CD4-positive, alpha-beta T cell (primary cell): ENCODE measurements at regions of chr6 and their contacts with region 1.

Region 1: GRCh38 chr6:30066577-30067459 is at the start of gene PPP1R11:
- DNase-seq: peak; percentile 95 to 100 (median 98)
- ATAC-seq: peak; percentile 95
- H3K4me3 ChIP-seq: peak within 1 kb of the TSS; percentile 79
- H3K4me3 Mint-ChIP-seq: peak within 1 kb of the TSS; percentile 94
- H3K27ac ChIP-seq: peak within 1 kb of the TSS; percentile 83 to 96
- H3K27ac Mint-ChIP-seq: peak within 1 kb of the TSS; percentile 96
- H3K4me1 ChIP-seq: peaks cover 42% of the 10 kb centered on the region
- H3K4me1 Mint-ChIP-seq: peaks cover 69% of the 10 kb centered on the region
- H3K27me3 ChIP-seq: peaks cover 9% of the 10 kb centered on the region in 2 experiments
- H3K27me3 Mint-ChIP-seq: peaks cover 14% of the 10 kb centered on the region
- CTCF ChIP-seq: no peak
- total RNA-seq, gene PPP1R11: 28.3 to 28.6 TPM

Region 2: GRCh38 chr6:29926413-29927274 is 140.2 kb before region 1 on chr6:
- CTCF ChIA-PET with region 1: no interaction called
- POLR2A ChIA-PET with region 1: no interaction called
- intact Hi-C with region 1: loop called in 1 of 2 experiments (anchors 5 kb)
- DNase-seq: peak; percentile 59 to 96 (median 85)
- ATAC-seq: peak; percentile 93
- H3K4me3 ChIP-seq: peak overlapping the region; percentile 97
- H3K4me3 Mint-ChIP-seq: peak overlapping the region; percentile 98
- H3K27ac ChIP-seq: peak overlapping the region; percentile 93 to 99
- H3K27ac Mint-ChIP-seq: peak overlapping the region; percentile 92
- H3K4me1 ChIP-seq: peaks cover 24% of the 10 kb centered on the region
- H3K4me1 Mint-ChIP-seq: peaks cover 26% of the 10 kb centered on the region
- H3K27me3 ChIP-seq: no peaks in the 10 kb centered on the region
- H3K27me3 Mint-ChIP-seq: no peaks in the 10 kb centered on the region
- CTCF ChIP-seq: no peak

Region 3: DNA sequence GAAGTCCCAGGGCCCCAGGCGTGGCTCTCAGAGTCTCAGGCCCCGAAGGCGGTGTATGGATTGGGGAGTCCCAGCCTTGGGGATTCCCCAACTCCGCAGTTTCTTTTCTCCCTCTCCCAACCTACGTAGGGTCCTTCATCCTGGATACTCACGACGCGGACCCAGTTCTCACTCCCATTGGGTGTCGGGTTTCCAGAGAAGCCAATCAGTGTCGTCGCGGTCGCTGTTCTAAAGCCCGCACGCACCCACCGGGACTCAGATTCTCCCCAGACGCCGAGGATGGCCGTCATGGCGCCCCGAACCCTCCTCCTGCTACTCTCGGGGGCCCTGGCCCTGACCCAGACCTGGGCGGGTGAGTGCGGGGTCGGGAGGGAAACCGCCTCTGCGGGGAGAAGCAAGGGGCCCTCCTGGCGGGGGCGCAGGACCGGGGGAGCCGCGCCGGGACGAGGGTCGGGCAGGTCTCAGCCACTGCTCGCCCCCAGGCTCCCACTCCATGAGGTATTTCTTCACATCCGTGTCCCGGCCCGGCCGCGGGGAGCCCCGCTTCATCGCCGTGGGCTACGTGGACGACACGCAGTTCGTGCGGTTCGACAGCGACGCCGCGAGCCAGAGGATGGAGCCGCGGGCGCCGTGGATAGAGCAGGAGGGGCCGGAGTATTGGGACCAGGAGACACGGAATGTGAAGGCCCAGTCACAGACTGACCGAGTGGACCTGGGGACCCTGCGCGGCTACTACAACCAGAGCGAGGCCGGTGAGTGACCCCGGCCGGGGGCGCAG is 124.4 kb before region 1 on chr6 and contains the start of gene HLA-A:
- CTCF ChIA-PET with region 1: no interaction called
- POLR2A ChIA-PET with region 1: interaction called, 4 read pairs
- intact Hi-C with region 1: loop called (anchors 5 to 10 kb)
- DNase-seq: peak; percentile 87 to 99 (median 91)
- ATAC-seq: peak; percentile 89
- H3K4me3 ChIP-seq: peak within 1 kb of the TSS; percentile 82
- H3K4me3 Mint-ChIP-seq: peak within 1 kb of the TSS; percentile 97
- H3K27ac ChIP-seq: peak within 1 kb of the TSS; percentile 96 to 99
- H3K27ac Mint-ChIP-seq: peak within 1 kb of the TSS; percentile 100
- H3K4me1 ChIP-seq: peaks cover 59% of the 10 kb centered on the region
- H3K4me1 Mint-ChIP-seq: peaks cover 60% of the 10 kb centered on the region
- H3K27me3 ChIP-seq: no peaks in the 10 kb centered on the region
- H3K27me3 Mint-ChIP-seq: peaks cover 4% of the 10 kb centered on the region
- CTCF ChIP-seq: no peak
- total RNA-seq, gene HLA-A: 1,767 to 1,801 TPM

Region 4: DNA sequence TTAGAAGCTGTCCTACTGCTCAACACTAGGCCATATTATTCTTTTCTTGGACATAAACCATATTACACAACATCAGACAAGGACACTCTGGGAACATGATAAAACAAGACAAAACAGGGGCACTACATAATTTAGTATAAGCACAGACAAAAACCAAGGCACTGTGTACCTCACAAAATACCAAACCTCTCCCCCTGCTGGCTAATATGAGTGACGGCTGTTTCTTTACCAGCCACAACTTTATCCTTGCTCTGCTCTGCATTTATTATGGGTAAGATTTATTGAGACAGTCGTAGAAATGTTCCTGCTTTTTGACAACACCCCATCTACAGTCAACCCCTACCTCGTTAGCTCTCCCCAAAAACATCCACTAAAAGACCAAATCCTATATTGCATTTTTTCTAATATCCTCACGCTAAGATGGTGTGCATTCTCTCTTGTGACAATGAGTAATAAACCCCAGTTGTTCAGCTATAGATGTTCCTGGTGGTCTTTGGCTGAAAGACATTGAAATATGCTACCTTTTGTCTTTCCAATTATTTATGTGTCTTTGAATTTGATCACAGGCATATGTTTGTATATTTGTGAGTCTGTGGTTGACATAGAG is 29.5 kb before region 1 on chr6:
- CTCF ChIA-PET with region 1: no interaction called
- POLR2A ChIA-PET with region 1: no interaction called
- intact Hi-C with region 1: no loop called
- DNase-seq: peak in 3 of 14 experiments; percentile 18 to 31 (median 30)
- ATAC-seq: no peak
- H3K4me3 ChIP-seq: no peak overlapping the region
- H3K4me3 Mint-ChIP-seq: no peak overlapping the region
- H3K27ac ChIP-seq: no peak overlapping the region
- H3K27ac Mint-ChIP-seq: no peak overlapping the region
- H3K4me1 ChIP-seq: no peaks in the 10 kb centered on the region
- H3K4me1 Mint-ChIP-seq: no peaks in the 10 kb centered on the region
- H3K27me3 ChIP-seq: no peaks in the 10 kb centered on the region
- H3K27me3 Mint-ChIP-seq: no peaks in the 10 kb centered on the region
- CTCF ChIP-seq: peak; percentile 46

Region 5: DNA sequence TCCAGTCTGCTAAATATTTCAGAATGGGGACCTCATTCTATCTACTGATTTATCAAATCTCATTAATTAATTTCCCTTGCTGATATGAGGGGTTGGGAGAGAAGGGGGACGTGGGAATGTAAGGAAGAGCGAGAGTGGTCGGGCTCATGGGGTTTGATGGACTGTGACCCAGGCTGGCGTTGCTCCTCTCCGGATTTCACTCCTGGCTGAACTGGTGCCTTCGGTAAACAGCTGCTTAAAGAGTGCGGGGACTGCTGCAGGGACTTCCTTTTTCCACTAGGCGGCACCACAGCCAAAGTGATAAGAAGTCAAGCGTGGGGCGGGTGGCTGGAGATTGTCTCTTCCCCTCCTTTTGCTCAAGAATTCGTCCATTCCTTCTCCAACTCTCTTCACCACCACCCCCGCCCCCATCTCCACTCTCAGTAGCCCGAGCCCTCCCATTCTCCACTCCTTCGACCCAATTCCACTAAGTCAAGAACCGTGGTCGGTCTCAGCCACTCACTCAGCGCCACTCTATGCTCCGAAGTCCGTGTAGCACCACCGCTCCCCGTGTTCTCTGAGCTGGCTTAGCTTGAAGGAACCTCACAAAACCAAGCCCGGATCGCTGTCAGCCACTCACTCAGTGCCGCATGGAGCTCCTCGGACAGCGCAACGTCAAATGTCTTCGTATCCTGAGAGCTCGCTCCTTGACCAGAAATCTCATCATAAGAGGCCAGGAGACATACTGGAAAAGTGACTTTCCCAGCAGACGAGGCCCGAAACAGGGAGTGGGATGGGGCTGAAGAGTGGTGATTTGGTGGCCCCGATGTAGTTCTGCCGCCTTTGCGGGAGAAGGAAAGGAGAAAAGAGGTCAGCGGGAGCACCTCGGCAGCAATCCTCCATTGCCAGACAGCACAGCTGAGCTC is 36.4 kb after region 1 on chr6:
- CTCF ChIA-PET with region 1: interaction called, 6 read pairs
- POLR2A ChIA-PET with region 1: interaction called, 17 read pairs
- intact Hi-C with region 1: loop called (anchors 1 to 2 kb)
- DNase-seq: peak; percentile 71 to 91 (median 79)
- ATAC-seq: peak; percentile 88
- H3K4me3 ChIP-seq: peak overlapping the region; percentile 60
- H3K4me3 Mint-ChIP-seq: peak overlapping the region; percentile 89
- H3K27ac ChIP-seq: no peak overlapping the region
- H3K27ac Mint-ChIP-seq: peak overlapping the region; percentile 65
- H3K4me1 ChIP-seq: peaks cover 44% of the 10 kb centered on the region
- H3K4me1 Mint-ChIP-seq: peaks cover 46% of the 10 kb centered on the region
- H3K27me3 ChIP-seq: peaks cover 19 to 21% of the 10 kb centered on the region in 2 experiments
- H3K27me3 Mint-ChIP-seq: peaks cover 61% of the 10 kb centered on the region
- CTCF ChIP-seq: peak; percentile 85

Region 6: DNA sequence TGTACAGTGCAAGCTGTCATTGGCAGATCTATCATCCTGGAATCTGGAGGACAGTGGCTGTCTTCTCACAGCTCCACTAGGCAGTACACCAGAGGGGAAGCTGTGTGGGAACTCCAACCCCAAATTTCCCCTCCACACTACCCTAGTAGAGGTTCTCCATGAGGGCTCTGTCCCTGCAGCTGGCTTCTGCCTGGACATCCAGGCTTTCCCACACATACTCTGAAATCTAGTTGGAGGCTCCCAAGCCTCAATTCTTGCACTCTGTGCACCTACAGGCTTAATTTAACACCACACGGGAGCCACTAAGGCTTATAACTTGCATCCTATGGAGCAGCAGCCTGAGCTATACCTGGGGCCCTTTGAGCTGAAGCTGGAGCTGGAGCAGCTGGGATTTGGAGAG is 216.9 kb after region 1 on chr6:
- CTCF ChIA-PET with region 1: no interaction called
- POLR2A ChIA-PET with region 1: no interaction called
- intact Hi-C with region 1: no loop called
- DNase-seq: no peak
- ATAC-seq: no peak
- H3K4me3 ChIP-seq: no peak overlapping the region
- H3K4me3 Mint-ChIP-seq: no peak overlapping the region
- H3K27ac ChIP-seq: no peak overlapping the region
- H3K27ac Mint-ChIP-seq: no peak overlapping the region
- H3K4me1 ChIP-seq: no peaks in the 10 kb centered on the region
- H3K4me1 Mint-ChIP-seq: no peaks in the 10 kb centered on the region
- H3K27me3 ChIP-seq: no peaks in the 10 kb centered on the region
- H3K27me3 Mint-ChIP-seq: no peaks in the 10 kb centered on the region
- CTCF ChIP-seq: no peak

Region 7: GRCh38 chr6:30326526-30327260 is 259.9 kb after region 1 on chr6 and contains the start of gene TRIM39:
- CTCF ChIA-PET with region 1: no interaction called
- POLR2A ChIA-PET with region 1: interaction called, 14 read pairs
- intact Hi-C with region 1: loop called (anchors 2 to 5 kb)
- DNase-seq: peak; percentile 73 to 97 (median 87)
- ATAC-seq: peak; percentile 59
- H3K4me3 ChIP-seq: peak within 1 kb of the TSS; percentile 83
- H3K4me3 Mint-ChIP-seq: peak within 1 kb of the TSS; percentile 97
- H3K27ac ChIP-seq: peak within 1 kb of the TSS; percentile 98 to 99
- H3K27ac Mint-ChIP-seq: peak within 1 kb of the TSS; percentile 97
- H3K4me1 ChIP-seq: peaks cover 52% of the 10 kb centered on the region
- H3K4me1 Mint-ChIP-seq: peaks cover 68% of the 10 kb centered on the region
- H3K27me3 ChIP-seq: no peaks in the 10 kb centered on the region
- H3K27me3 Mint-ChIP-seq: no peaks in the 10 kb centered on the region
- CTCF ChIP-seq: no peak
- total RNA-seq, gene TRIM39: 38.2 to 38.3 TPM

Region 8: DNA sequence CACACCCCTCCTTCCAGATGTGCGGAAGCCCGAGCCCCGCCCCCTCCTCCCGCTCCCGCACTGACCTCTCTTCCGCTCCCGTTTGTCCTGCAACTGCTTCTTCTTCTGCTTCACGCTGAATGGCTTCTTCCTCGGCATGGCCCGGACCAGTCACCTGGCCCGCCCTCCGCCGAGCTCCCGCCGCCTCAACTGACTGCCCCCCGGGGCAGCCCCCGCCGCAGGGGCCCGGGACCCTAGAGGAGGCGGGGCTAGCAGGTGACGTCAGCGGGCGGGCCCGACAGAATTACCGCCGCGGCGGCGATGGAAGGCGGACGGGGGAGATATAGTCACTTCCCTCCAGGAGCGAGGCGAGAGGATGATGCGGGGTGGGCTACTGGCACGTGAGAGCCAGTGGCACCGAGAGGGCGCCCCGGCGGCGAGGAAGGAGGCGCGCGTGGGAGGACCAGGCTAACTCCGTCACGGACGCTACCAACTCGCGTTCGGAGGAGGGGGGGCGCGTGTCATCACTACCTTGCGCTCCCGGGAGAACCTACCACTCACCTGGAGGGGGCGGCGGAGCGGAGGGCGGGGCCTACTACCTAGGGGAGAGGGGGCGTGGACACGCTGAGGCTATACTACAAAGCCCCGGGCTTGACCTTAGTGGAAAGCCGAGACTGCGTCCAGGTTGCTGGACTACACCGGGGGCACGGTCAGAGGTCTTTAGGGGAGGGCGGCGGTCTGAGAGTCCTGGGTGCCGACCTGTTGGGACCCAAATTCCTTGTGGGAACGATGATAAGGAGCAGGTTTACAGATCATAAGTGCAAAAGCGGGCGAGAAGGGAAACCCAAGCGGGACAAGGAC is 489.5 kb after region 1 on chr6 and contains the start of gene GNL1:
- CTCF ChIA-PET with region 1: no interaction called
- POLR2A ChIA-PET with region 1: no interaction called
- intact Hi-C with region 1: loop called in 1 of 2 experiments (anchors 5 kb)
- DNase-seq: peak; percentile 98 to 100 (median 99)
- ATAC-seq: peak; percentile 88
- H3K4me3 ChIP-seq: peak within 1 kb of the TSS; percentile 86
- H3K4me3 Mint-ChIP-seq: peak within 1 kb of the TSS; percentile 98
- H3K27ac ChIP-seq: peak within 1 kb of the TSS; percentile 94 to 97
- H3K27ac Mint-ChIP-seq: peak within 1 kb of the TSS; percentile 97
- H3K4me1 ChIP-seq: peaks cover 27% of the 10 kb centered on the region
- H3K4me1 Mint-ChIP-seq: peaks cover 50% of the 10 kb centered on the region
- H3K27me3 ChIP-seq: no peaks in the 10 kb centered on the region
- H3K27me3 Mint-ChIP-seq: no peaks in the 10 kb centered on the region
- CTCF ChIP-seq: no peak
- total RNA-seq, gene GNL1: 145 to 151 TPM

Region 9: GRCh38 chr6:31958741-31959739 is 1892.2 kb after region 1 on chr6 and contains the starts of genes NELFE and SKIC2:
- CTCF ChIA-PET with region 1: no interaction called
- POLR2A ChIA-PET with region 1: interaction called, 3 read pairs
- intact Hi-C with region 1: loop called in 1 of 2 experiments (anchors 10 kb)
- DNase-seq: peak; percentile 96 to 100 (median 98)
- ATAC-seq: peak; percentile 97
- H3K4me3 ChIP-seq: peak within 1 kb of the TSS; percentile 97
- H3K4me3 Mint-ChIP-seq: peak within 1 kb of the TSS; percentile 96
- H3K27ac ChIP-seq: peak within 1 kb of the TSS; percentile 94 to 96
- H3K27ac Mint-ChIP-seq: peak within 1 kb of the TSS; percentile 97
- H3K4me1 ChIP-seq: peaks cover 30% of the 10 kb centered on the region
- H3K4me1 Mint-ChIP-seq: peaks cover 38% of the 10 kb centered on the region
- H3K27me3 ChIP-seq: no peaks in the 10 kb centered on the region
- H3K27me3 Mint-ChIP-seq: no peaks in the 10 kb centered on the region
- CTCF ChIP-seq: no peak
- total RNA-seq, gene NELFE: 53.8 to 58.2 TPM
- total RNA-seq, gene SKIC2: 133 to 141 TPM